ENCODE measurements at regions of chr18 and their contacts with region 1.

Region 1: GRCh38 chr18:3710712-3711269 is 260.8 kb downstream of the TGIF1 start:
- DNase-seq: peak; percentile 96
- H3K4me3 ChIP-seq: no peak overlapping the region
- H3K27ac ChIP-seq: peak overlapping the region; percentile 90
- H3K4me1 ChIP-seq: peaks cover 27% of the 10 kb centered on the region
- H3K27me3 ChIP-seq: no peaks in the 10 kb centered on the region
- CTCF ChIP-seq: no peak
- POLR2A ChIP-seq: peak; percentile 93

Region 2: DNA sequence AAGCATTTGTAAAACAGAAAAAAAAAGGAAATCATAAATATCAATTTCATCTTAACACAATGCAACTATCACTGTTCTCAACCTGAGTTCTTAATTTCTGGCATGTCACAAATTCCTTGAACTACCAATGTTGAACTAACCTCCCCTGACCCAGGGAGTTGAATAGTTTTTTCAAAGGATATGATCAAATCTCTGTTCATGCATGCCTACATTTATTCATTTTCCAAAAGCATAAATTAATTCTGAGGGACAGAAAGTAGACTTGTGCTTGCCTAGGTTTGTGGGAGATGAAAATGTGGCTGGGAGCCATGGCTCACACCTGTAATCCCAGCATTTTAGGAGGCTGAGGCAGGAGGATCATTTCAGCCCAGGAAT is 85.1 kb before region 1 on chr18:
- CTCF ChIA-PET with region 1: no interaction called
- POLR2A ChIA-PET with region 1: no interaction called
- dilution Hi-C with region 1: no loop called
- intact Hi-C with region 1: no loop called
- DNase-seq: peak; percentile 40
- H3K4me3 ChIP-seq: no peak overlapping the region
- H3K27ac ChIP-seq: peak overlapping the region; percentile 89
- H3K4me1 ChIP-seq: peaks cover 31% of the 10 kb centered on the region
- H3K27me3 ChIP-seq: no peaks in the 10 kb centered on the region
- CTCF ChIP-seq: no peak
- POLR2A ChIP-seq: no peak

Region 3: DNA sequence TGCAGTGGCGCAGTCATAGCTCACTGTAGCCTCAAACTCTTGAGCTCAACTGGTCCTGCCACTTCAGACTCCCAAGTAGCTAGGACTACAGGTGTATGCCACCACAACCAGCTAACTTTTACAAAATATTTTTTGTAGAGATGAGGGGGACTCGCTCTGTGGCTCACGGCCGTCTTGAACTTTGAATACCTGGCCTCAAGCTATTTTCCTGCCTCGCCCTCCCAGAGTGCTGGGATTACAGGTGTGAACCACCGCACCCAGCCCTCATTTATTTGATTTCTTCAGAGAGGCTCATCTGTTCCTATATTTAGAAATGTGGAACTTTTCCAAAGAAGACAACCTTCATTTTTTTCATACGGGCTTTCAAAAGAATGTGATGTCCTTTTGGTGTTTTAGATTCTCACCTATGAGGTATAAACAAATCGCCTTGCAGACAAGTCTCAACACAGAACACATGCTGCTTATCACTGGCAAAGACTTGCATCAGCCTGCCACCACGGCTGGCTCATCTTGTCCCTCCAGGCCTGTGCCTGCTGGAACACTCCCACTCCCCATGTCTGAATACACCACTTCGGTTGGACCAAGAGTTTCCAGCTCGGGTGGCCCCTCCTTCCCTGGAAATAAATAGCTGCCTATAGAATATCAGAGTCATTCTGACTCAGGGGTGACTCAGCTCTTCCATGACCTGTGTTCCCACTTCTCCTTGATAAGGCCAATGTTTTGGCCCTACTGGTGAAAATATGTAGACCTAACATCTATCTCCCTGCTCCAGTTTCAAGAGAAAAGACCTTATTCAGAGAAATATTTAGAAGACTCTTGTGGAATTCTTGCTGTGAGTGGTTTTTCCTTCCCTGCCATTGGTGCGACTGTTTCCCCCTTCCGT is 58.2 kb before region 1 on chr18:
- CTCF ChIA-PET with region 1: no interaction called
- POLR2A ChIA-PET with region 1: no interaction called
- dilution Hi-C with region 1: no loop called
- intact Hi-C with region 1: loop called (anchors 2 kb)
- DNase-seq: peak; percentile 97
- H3K4me3 ChIP-seq: peak overlapping the region in 1 of 3 experiments; percentile 42
- H3K27ac ChIP-seq: peak overlapping the region; percentile 83
- H3K4me1 ChIP-seq: peaks cover 46% of the 10 kb centered on the region
- H3K27me3 ChIP-seq: no peaks in the 10 kb centered on the region
- CTCF ChIP-seq: peak in 1 of 2 donors; percentile 4
- POLR2A ChIP-seq: no peak

Region 4: DNA sequence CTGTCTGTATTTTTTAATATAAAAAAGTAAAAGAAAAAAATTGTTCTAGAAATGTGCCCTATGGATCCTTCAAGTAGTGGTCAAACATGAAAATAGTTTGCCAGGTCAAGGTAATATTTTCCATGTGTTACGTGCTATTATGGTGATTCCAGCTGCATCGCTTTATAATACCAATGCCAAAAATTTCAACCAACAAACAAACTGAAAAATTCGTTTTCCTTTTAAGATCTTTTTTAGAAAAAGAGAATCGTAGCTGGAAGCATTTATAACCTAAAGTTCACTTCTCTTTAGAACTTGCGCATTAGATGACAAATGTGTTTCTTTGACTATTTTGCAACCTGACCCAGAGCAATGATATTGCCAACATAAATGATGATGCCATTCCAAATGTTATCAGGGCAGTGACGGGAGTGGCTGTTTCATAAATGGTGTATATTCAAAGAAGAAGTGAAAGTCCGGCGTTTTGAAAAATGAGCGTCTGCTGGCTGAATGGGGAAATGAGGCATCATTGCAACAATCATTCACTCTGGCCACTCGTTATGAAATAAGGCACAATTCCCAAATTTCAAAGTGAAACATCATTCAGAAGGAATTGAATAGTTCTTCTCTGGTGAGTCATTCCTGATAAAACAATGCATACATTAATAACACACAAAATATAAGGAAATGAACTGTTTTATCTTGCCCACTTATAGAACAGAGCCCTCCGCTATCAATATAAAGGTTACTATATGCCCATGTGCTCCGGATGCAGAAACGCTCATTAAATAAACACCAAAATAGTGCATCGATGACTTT is 36.6 kb after region 1 on chr18:
- CTCF ChIA-PET with region 1: interaction called, 4 read pairs
- POLR2A ChIA-PET with region 1: no interaction called
- dilution Hi-C with region 1: no loop called
- intact Hi-C with region 1: loop called (anchors 1 kb)
- DNase-seq: peak; percentile 90
- H3K4me3 ChIP-seq: peak overlapping the region in 2 of 3 experiments; percentile 4 to 44
- H3K27ac ChIP-seq: peak overlapping the region; percentile 87
- H3K4me1 ChIP-seq: peaks cover 25% of the 10 kb centered on the region
- H3K27me3 ChIP-seq: no peaks in the 10 kb centered on the region
- CTCF ChIP-seq: no peak
- POLR2A ChIP-seq: no peak

Region 5: GRCh38 chr18:3784949-3785348 is 74.2 kb after region 1 on chr18:
- CTCF ChIA-PET with region 1: no interaction called
- POLR2A ChIA-PET with region 1: no interaction called
- dilution Hi-C with region 1: no loop called
- intact Hi-C with region 1: no loop called
- DNase-seq: no peak
- H3K4me3 ChIP-seq: no peak overlapping the region
- H3K27ac ChIP-seq: no peak overlapping the region
- H3K4me1 ChIP-seq: no peaks in the 10 kb centered on the region
- H3K27me3 ChIP-seq: no peaks in the 10 kb centered on the region
- CTCF ChIP-seq: no peak
- POLR2A ChIP-seq: no peak

Region 6: GRCh38 chr18:4641771-4642368 is 931.1 kb after region 1 on chr18:
- CTCF ChIA-PET with region 1: no interaction called
- POLR2A ChIA-PET with region 1: no interaction called
- dilution Hi-C with region 1: no loop called
- intact Hi-C with region 1: no loop called
- DNase-seq: no peak
- H3K4me3 ChIP-seq: no peak overlapping the region
- H3K27ac ChIP-seq: no peak overlapping the region
- H3K4me1 ChIP-seq: no peaks in the 10 kb centered on the region
- H3K27me3 ChIP-seq: no peaks in the 10 kb centered on the region
- CTCF ChIP-seq: no peak
- POLR2A ChIP-seq: no peak

Measured in endothelial cell of umbilical vein (primary cell).